PC-9 (cell line): ENCODE measurements at regions of chr1 and their contacts with region 1.

Region 1: GRCh38 chr1:22689505-22689904 is 21.1 kb upstream of the EPHB2 start:
- DNase-seq: peak; percentile 84 to 94
- H3K4me3 ChIP-seq: no peak overlapping the region
- H3K27ac ChIP-seq: peak overlapping the region; percentile 46; the same call in 1 of the 2 replicates
- H3K4me1 ChIP-seq: peaks cover 11% of the 10 kb centered on the region
- H3K27me3 ChIP-seq: no peaks in the 10 kb centered on the region
- CTCF ChIP-seq: no peak

Region 2: GRCh38 chr1:22850681-22851080 is 161.2 kb after region 1 on chr1:
- CTCF ChIA-PET with region 1: interaction called, 11 read pairs
- POLR2A ChIA-PET with region 1: no interaction called
- intact Hi-C with region 1: no loop called
- DNase-seq: peak in 1 of 2 experiments; percentile 46
- H3K4me3 ChIP-seq: no peak overlapping the region
- H3K27ac ChIP-seq: no peak overlapping the region
- H3K4me1 ChIP-seq: no peaks in the 10 kb centered on the region
- H3K27me3 ChIP-seq: no peaks in the 10 kb centered on the region
- CTCF ChIP-seq: no peak

Region 3: DNA sequence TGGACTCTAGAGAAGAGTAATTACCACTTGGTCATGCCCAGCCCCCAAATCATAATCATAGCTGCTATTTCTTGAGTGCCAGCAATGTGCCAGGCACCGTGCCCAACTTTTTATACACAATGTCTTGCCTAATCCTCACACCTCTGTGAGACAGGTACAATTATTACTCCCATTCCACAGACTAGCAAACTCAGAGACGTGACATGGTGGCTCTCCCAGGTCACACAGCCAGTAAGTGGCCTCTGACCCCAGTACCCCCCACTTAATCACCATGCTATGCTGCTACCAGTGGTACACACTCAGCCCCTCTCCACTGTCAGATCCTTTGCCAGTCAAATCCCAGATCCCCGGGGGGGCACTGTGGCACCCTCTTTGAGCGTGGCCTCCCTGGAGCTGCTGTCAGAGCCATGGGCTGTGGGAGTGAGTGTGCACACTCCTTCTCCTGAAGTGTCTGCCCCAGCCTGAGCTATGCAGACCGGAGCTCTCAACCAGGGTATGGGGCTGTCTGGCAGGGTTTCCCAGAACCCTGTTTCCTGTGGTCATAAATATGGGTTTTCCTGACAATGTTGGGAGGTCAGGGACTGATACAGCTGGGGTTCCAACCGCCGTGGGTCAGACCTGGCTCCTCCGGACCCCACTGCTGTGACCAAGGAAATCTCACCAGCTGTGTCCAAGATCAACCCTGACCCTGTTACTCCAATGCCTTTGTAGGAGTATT is 231.4 kb after region 1 on chr1:
- CTCF ChIA-PET with region 1: no interaction called
- POLR2A ChIA-PET with region 1: no interaction called
- intact Hi-C with region 1: no loop called
- DNase-seq: no peak
- H3K4me3 ChIP-seq: no peak overlapping the region
- H3K27ac ChIP-seq: no peak overlapping the region
- H3K4me1 ChIP-seq: no peaks in the 10 kb centered on the region
- H3K27me3 ChIP-seq: no peaks in the 10 kb centered on the region
- CTCF ChIP-seq: no peak